IMR-90 (cell line): ENCODE measurements at regions of chr15 and their contacts with region 1.

Region 1: DNA sequence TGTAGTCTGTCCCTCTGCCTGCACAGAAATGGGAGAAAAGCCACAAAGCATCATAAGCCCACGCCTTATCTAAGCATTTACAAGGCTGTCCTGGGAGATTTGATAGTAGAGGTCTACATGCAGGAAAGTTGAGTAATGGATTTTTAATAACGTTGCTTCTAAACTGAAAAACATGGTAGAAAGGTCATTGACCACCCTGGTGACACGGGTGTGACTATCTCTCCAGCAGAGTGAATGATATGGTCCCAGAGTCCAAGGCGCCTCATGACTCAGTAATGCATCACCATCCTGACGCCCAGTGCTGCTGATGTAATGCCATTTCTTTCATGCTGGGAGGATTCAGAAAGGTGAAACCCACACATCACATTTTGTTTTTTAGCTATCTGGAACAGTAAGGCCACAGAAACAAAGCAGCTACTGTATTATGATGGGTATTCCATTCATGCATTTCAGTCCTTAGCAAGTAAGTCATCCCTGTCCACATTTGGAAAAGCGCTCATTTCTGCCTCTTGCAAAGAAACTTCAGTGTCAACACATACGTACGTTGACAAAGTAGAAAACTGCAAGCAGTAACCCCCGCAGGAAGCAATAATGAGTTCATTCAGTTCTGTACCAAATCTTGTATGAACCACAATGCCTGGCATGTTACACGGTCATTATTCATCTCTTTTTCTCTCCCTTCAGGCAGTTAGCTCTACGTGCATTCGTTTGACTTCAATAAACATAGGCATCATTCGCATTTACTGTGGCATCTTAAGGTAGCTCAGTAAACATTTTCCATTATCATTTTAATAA is 483.5 kb downstream of the GABRG3 start:
- DNase-seq: peak; percentile 54
- ATAC-seq: no peak
- H3K4me3 ChIP-seq: no peak overlapping the region
- H3K27ac ChIP-seq: no peak overlapping the region
- H3K4me1 ChIP-seq: no peaks in the 10 kb centered on the region
- H3K27me3 ChIP-seq: no peaks in the 10 kb centered on the region
- CTCF ChIP-seq: no peak
- POLR2A ChIP-seq: no peak
- RAD21 ChIP-seq: no peak

Region 2: GRCh38 chr15:27441120-27441519 is 13.4 kb before region 1 on chr15:
- CTCF ChIA-PET with region 1: no interaction called
- POLR2A ChIA-PET with region 1: no interaction called
- dilution Hi-C with region 1: no loop called
- in situ Hi-C with region 1: no loop called
- intact Hi-C with region 1: no loop called
- DNase-seq: no peak
- ATAC-seq: no peak
- H3K4me3 ChIP-seq: no peak overlapping the region
- H3K27ac ChIP-seq: no peak overlapping the region
- H3K4me1 ChIP-seq: no peaks in the 10 kb centered on the region
- H3K27me3 ChIP-seq: no peaks in the 10 kb centered on the region
- CTCF ChIP-seq: no peak
- POLR2A ChIP-seq: no peak
- RAD21 ChIP-seq: no peak

Region 3: DNA sequence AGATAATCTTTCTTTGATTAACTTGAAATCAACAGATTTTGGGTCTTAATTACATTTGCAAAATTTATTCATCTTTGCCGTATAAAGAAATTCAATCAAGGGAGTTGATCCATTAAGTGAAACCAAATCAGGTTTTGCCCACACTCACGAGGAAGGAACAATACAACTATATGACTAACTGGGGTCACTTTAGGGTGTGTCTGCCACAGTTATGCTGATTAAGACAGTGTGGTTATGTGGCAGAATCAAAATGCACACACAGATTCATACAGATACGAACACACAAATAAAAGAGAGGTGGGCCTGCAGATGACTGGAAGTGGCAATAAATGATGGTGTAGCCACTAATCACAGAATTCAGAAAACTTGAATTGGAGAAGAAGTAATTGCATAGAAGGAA is 60.0 kb after region 1 on chr15:
- CTCF ChIA-PET with region 1: no interaction called
- POLR2A ChIA-PET with region 1: no interaction called
- dilution Hi-C with region 1: no loop called
- in situ Hi-C with region 1: loop called (anchors 10 kb)
- intact Hi-C with region 1: no loop called
- DNase-seq: no peak
- ATAC-seq: no peak
- H3K4me3 ChIP-seq: no peak overlapping the region
- H3K27ac ChIP-seq: no peak overlapping the region
- H3K4me1 ChIP-seq: no peaks in the 10 kb centered on the region
- H3K27me3 ChIP-seq: no peaks in the 10 kb centered on the region
- CTCF ChIP-seq: no peak
- POLR2A ChIP-seq: no peak
- RAD21 ChIP-seq: no peak

Region 4: DNA sequence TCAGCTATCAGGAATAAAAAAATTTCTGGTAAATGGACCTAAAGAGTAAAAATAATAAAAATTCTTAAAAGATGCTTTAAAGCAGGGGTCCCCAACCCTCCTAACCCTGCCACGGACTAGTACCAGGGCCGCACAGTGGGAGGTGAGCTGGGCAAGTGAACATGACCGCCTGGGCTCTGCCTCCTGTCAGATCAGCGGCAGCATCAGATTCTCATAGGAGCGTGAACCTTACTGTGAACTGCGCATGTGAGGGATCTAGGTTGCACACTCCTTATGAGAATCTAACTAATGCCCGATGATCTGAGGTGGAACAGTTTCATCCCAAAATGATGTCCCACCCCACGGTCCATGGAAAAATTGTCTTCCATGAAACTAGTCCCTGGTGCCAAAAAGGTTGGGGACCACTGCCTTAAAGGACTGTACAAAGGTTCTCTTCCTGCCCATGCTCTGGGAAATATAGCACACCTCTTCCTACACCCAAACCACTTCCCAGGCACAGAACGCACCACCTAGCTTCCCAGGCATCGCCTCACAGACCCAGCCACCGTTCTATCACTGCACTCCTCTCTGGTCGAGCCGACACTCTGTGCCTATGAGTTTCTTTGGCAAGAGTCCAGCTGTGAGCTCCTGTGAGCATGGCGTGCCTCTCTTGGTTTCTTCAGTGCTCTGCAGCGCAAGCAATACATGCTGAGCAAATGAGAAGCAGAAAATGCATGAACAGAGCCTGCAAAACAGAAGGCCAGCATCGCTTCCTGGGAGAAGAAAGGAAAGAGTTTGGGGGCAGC is 539.7 kb after region 1 on chr15:
- CTCF ChIA-PET with region 1: interaction called, 11 read pairs
- POLR2A ChIA-PET with region 1: no interaction called
- dilution Hi-C with region 1: no loop called
- in situ Hi-C with region 1: no loop called
- intact Hi-C with region 1: no loop called
- DNase-seq: no peak
- ATAC-seq: no peak
- H3K4me3 ChIP-seq: no peak overlapping the region
- H3K27ac ChIP-seq: no peak overlapping the region
- H3K4me1 ChIP-seq: no peaks in the 10 kb centered on the region
- H3K27me3 ChIP-seq: no peaks in the 10 kb centered on the region
- CTCF ChIP-seq: no peak
- POLR2A ChIP-seq: no peak
- RAD21 ChIP-seq: no peak